Naive thymus-derived CD8-positive, alpha-beta T cell (primary cell): ENCODE measurements at regions of chr9 and their contacts with region 1.

Region 1: GRCh38 chr9:92963831-92964626 is 16.7 kb downstream of the FGD3 start:
- DNase-seq: peak; percentile 47 to 96 (median 80)
- ATAC-seq: peak; percentile 66 to 73
- H3K4me3 Mint-ChIP-seq: peak overlapping the region; percentile 86 to 97 (median 92)
- H3K27ac Mint-ChIP-seq: peak overlapping the region; percentile 91 to 100 (median 98)
- H3K4me1 Mint-ChIP-seq: peaks cover 28 to 84% (median 60%) of the 10 kb centered on the region in 4 donors
- H3K27me3 Mint-ChIP-seq: no peaks in the 10 kb centered on the region

Region 2: DNA sequence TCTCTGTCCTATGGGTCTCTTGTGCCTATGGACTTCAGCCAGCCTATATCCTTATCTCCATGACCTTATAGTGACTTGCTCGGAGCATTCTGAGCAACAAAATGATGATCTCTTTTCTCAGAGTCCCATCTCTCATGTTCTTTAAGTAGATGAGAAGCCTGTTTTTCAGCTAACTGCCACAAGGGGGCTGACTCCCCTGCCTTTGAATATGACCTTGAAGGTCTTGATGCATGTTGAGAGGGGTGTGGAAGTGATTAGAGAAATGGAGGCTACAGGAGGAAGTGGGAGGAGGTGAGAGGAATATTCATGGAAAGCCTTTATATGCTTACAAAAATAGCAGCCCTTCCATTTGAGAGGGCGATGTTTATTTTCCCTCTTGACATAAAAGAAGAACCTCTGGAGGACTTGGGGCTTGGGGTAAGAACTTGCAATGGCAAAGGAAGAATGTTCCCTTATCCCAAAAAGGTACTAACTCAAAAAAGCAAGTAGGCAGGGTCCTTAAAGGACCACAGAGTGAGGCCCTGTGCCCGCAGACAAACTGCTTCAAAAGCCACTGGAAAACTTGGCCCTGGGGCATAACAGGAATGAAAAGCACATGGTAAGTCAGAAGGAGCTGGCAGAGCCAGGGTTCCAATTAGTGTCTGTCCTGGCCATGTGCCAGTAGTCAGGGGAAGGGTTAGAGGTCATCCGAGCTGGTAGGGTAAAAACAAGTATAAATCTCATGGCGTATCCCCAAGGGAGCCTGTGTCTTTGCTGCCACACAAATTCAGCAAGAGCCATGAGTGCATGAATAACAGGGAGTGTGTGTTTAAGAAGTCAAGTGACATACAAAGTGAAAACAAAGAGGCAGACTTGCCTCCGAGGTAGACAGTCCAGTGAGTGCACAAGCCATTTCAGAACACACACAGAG is 22.4 kb after region 1 on chr9:
- POLR2A ChIA-PET with region 1: interaction called, 223 read pairs
- DNase-seq: peak in 8 of 10 donors; percentile 37 to 79 (median 62)
- ATAC-seq: peak; percentile 51 to 70
- H3K4me3 Mint-ChIP-seq: peak overlapping the region in 8 of 10 donors; percentile 30 to 66 (median 57)
- H3K27ac Mint-ChIP-seq: peak overlapping the region; percentile 54 to 94 (median 90)
- H3K4me1 Mint-ChIP-seq: peaks cover 53 to 89% (median 85%) of the 10 kb centered on the region in 4 donors
- H3K27me3 Mint-ChIP-seq: no peaks in the 10 kb centered on the region

Region 3: GRCh38 chr9:93020771-93021670 is 57.0 kb after region 1 on chr9:
- POLR2A ChIA-PET with region 1: interaction called, 167 read pairs
- DNase-seq: peak in 9 of 10 donors; percentile 37 to 79 (median 67)
- ATAC-seq: peak; percentile 72 to 89
- H3K4me3 Mint-ChIP-seq: peak overlapping the region in 7 of 10 donors; percentile 7 to 45 (median 22)
- H3K27ac Mint-ChIP-seq: peak overlapping the region; percentile 75 to 100 (median 98)
- H3K4me1 Mint-ChIP-seq: peaks cover 21 to 75% (median 51%) of the 10 kb centered on the region in 4 donors
- H3K27me3 Mint-ChIP-seq: no peaks in the 10 kb centered on the region

Region 4: DNA sequence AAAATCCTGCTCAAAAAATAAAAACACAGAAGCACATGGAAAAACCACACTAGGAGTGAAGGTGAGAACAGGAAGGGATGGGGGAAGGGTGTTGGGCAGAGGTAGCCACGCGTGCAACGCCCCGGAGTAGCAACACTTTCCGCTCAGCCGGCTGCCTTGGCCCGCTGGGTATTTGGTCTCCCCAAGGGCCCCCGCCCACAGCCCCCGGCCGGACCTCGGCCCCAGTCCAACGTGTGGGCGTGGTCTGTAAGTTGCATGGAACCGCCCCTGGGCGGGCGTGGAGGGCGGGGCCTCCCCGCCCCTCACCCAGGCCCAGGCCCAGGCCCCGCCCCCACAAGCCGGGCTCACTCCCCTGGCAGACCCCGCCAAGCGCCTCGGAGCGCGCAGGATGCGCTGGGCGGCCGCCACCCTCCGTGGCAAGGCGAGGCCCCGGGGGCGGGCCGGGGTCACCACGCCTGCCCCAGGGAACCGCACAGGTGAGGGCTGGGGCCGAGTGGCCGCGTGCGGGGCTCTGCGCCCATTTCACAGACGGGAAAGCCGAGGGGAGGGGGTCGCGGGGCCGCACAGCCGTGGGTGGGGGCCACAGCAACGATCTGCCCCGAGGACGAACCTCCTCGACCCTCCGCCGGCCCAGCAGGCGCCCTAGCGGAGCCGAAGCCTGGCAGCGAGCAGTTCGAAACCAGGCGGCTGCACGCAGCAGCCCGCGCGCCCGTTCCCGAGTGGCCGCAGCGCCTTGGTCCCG is 94.5 kb after region 1 on chr9 and contains the start of gene SUSD3:
- POLR2A ChIA-PET with region 1: interaction called, 116 read pairs
- DNase-seq: peak; percentile 57 to 80 (median 62)
- ATAC-seq: peak; percentile 57 to 63
- H3K4me3 Mint-ChIP-seq: peak within 1 kb of the TSS; percentile 85 to 96 (median 92)
- H3K27ac Mint-ChIP-seq: peak within 1 kb of the TSS; percentile 93 to 100 (median 100)
- H3K4me1 Mint-ChIP-seq: peaks cover 37 to 80% (median 73%) of the 10 kb centered on the region in 4 donors
- H3K27me3 Mint-ChIP-seq: no peaks in the 10 kb centered on the region
- polyA plus RNA-seq, gene SUSD3: 86.7 to 208 (median 145) TPM

Region 5: DNA sequence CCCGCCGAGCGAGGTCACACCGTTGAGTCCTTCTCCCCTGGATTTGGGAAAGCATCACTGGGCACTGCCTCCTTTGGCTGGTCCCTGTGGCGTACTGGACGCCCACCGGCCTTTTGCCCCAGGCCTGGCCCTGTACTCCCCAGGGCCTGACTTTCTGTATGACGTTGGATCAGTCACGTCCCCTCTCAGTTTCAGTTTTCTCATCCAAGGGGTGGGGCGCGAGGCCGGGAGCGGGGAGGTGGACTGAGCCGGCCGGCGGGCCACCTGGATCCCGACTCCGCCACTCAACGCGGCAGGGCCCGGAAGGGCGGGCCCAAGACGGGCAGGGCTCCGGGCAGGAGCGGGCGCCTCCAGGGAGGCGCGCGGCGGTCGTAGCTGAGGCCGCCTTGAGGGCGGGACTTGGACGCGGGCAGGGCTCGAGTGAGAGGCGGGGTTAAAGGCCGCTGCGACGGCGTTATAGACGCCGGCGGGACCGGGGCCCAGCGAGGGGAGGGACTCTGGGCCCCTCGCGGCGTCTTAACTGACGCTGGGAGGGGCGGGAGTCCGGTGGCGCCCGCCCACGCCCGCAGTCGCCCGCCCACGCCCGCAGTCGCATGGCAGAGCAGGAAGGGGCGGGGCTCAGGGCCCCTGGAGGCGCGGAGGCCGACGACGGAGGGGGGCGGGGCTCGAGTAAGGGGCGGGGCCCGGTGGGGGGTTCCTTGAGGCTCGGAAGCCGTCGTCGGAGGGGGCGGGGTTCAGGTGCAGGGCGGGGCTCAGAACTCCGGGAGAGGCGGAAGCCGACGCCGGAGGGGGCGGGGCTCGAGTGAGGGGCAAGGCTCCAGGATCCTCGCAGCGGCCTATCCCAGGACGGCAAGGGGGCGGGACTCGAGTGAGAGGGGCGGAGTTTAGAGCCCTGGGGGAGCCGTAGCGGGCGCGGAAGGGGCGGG is 131.4 kb after region 1 on chr9:
- POLR2A ChIA-PET with region 1: interaction called, 55 read pairs
- DNase-seq: peak; percentile 98 to 100 (median 100)
- ATAC-seq: peak; percentile 78 to 82
- H3K4me3 Mint-ChIP-seq: peak overlapping the region; percentile 73 to 91 (median 87)
- H3K27ac Mint-ChIP-seq: peak overlapping the region; percentile 91 to 98 (median 97)
- H3K4me1 Mint-ChIP-seq: peaks cover 44 to 81% (median 75%) of the 10 kb centered on the region in 4 donors
- H3K27me3 Mint-ChIP-seq: no peaks in the 10 kb centered on the region